ENCODE measurements at regions of chr13 and their contacts with region 1.

Region 1: GRCh38 chr13:73708393-73708985 is 425.7 kb downstream of the KLF12 start:
- DNase-seq: peak in 1 of 2 donors; percentile 35
- H3K4me3 ChIP-seq: no peak overlapping the region
- CTCF ChIP-seq: peak in 1 of 3 donors; percentile 17
- POLR2A ChIP-seq: no peak

Region 2: DNA sequence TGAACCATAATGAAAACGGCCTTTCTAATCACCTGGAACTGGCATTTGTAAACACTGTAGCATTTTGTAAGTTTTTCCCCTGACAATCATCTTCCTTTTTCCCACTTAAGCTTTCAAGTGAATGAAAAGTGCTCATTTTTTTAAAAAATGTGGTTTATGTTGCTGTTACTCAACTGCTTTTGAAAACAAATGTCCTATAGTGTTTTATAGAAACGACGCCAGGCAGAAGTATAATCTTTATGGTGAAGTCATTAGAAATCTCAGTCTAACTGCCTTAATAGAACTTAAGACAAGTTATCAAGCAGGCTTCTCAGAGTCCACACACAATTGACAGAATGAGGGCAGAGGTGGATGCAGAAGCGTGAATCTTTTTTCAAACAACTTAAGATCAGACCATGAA is 16.6 kb before region 1 on chr13:
- intact Hi-C with region 1: loop called (anchors 1 kb)
- DNase-seq: no peak
- H3K4me3 ChIP-seq: no peak overlapping the region
- CTCF ChIP-seq: no peak
- POLR2A ChIP-seq: no peak

Region 3: DNA sequence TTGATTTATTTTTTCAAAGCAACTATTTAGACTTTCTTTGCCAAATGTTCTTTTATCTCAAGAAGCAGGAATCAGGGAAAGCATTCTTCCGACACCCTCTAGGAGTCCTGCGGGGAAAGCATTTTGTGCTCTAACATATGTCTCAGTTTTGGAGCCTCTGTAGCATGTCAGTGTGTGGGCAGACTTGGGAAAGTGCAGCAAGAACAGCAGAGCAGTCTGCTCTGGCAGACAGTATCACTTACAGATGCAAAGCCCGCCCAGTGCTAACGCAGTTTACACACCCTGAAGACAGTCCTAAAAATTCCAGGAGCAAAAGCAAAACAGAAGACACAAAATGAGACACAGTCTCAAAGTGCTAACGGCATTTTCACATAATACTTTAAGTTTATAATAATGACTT is 32.2 kb after region 1 on chr13:
- intact Hi-C with region 1: no loop called
- DNase-seq: no peak
- H3K4me3 ChIP-seq: no peak overlapping the region
- CTCF ChIP-seq: no peak
- POLR2A ChIP-seq: no peak

Region 4: GRCh38 chr13:73754727-73755292 is 46.3 kb after region 1 on chr13:
- intact Hi-C with region 1: no loop called
- DNase-seq: peak in 1 of 2 donors; percentile 40
- H3K4me3 ChIP-seq: no peak overlapping the region
- CTCF ChIP-seq: no peak
- POLR2A ChIP-seq: no peak

Measured in lower leg skin (tissue), 4 donors.